Activated CD4-positive, alpha-beta T cell treated with anti-CD3 and anti-CD28 coated beads for 36 hours (primary cell): ENCODE measurements at regions of chr16 and their contacts with region 1.

Region 1: GRCh38 chr16:96935-97381 is 18.9 kb downstream of the MPG start:
- DNase-seq: peak; percentile 94
- ATAC-seq: peak; percentile 99
- H3K4me3 Mint-ChIP-seq: no peak overlapping the region
- H3K27ac Mint-ChIP-seq: no peak overlapping the region
- H3K4me1 Mint-ChIP-seq: no peaks in the 10 kb centered on the region
- H3K27me3 Mint-ChIP-seq: no peaks in the 10 kb centered on the region

Region 2: DNA sequence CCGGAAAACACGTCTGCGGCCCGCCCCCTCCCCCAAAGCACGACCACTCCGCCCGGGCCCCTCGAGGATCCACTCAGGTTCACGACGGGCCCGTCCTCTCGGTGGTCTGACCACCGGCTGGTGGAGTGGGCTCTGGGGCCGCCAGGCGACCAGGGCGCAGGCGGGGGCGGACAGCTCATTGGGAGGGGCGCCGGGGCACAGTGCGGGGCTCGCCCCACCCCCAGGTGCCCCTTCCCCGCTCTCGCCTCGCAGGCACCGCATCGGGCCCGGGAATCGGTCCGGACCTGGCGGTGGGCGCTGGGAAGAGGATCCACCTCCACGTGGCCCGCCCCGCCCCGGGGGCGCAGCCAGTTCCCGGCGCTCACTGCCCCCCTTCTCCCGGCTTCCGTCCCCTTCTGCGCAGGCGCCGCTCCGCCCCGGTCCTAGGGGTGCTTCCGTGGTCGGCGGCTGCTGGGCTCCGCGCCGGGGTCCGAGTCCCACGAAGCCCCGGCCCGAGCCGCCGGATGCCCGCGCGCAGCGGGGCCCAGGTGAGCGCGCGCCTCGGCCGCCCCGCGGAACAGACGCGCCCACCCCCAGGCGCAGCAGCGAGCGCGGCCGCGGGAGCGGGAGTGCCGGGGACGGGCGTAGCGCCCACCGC is 19.0 kb before region 1 on chr16 and contains the start of gene MPG:
- CTCF ChIA-PET with region 1: interaction called, 214 read pairs
- POLR2A ChIA-PET with region 1: interaction called, 3 read pairs
- intact Hi-C with region 1: no loop called
- DNase-seq: peak; percentile 91
- ATAC-seq: peak; percentile 87
- H3K4me3 Mint-ChIP-seq: peak within 1 kb of the TSS; percentile 87
- H3K27ac Mint-ChIP-seq: peak within 1 kb of the TSS; percentile 83
- H3K4me1 Mint-ChIP-seq: peaks cover 30% of the 10 kb centered on the region
- H3K27me3 Mint-ChIP-seq: peaks cover 10% of the 10 kb centered on the region
- total RNA-seq, gene MPG: 47.0 to 57.0 TPM

Region 3: DNA sequence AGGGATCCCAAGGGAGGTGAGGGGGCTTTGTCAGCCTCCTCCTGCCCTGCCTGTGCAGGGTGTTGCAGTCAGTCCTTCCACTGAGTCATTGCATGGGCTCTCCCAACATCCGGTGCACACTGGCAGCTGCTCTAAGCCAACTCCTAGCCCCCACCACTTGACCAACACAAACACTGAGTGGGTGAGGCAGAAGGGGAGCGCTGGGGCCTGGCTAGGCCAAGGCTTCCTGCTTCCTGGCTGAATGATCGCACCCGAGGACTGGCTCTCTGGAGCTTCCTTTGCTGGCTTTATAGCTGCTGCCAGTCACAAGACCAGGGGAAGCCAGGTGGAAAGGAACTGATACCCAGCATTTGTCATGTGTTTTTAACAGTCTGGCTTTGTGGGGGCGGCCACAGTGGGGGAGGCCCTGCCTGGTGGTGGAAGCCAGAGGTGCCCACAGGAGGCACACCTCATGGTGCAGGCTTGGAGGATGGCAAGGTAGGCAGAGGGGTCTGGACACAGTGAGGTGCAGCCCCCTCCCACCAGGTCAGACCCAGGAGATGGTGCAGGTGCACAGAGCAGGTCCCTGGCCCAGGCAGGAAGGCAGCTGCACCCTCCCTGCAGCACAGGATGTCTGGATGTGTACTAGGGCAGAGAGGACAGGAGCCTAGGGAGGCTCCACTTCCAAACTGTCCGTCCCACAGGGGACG is 12.1 kb before region 1 on chr16:
- CTCF ChIA-PET with region 1: interaction called, 36 read pairs
- POLR2A ChIA-PET with region 1: no interaction called
- intact Hi-C with region 1: no loop called
- DNase-seq: peak; percentile 85
- ATAC-seq: peak; percentile 92
- H3K4me3 Mint-ChIP-seq: peak overlapping the region; percentile 32
- H3K27ac Mint-ChIP-seq: peak overlapping the region; percentile 87
- H3K4me1 Mint-ChIP-seq: peaks cover 31% of the 10 kb centered on the region
- H3K27me3 Mint-ChIP-seq: no peaks in the 10 kb centered on the region

Region 4: GRCh38 chr16:125011-125410 is 28.1 kb after region 1 on chr16:
- CTCF ChIA-PET with region 1: no interaction called
- POLR2A ChIA-PET with region 1: no interaction called
- intact Hi-C with region 1: no loop called
- DNase-seq: no peak
- ATAC-seq: no peak
- H3K4me3 Mint-ChIP-seq: no peak overlapping the region
- H3K27ac Mint-ChIP-seq: no peak overlapping the region
- H3K4me1 Mint-ChIP-seq: peaks cover 11% of the 10 kb centered on the region
- H3K27me3 Mint-ChIP-seq: no peaks in the 10 kb centered on the region